ENCODE measurements at regions of chr2 and their contacts with region 1.

Region 1: DNA sequence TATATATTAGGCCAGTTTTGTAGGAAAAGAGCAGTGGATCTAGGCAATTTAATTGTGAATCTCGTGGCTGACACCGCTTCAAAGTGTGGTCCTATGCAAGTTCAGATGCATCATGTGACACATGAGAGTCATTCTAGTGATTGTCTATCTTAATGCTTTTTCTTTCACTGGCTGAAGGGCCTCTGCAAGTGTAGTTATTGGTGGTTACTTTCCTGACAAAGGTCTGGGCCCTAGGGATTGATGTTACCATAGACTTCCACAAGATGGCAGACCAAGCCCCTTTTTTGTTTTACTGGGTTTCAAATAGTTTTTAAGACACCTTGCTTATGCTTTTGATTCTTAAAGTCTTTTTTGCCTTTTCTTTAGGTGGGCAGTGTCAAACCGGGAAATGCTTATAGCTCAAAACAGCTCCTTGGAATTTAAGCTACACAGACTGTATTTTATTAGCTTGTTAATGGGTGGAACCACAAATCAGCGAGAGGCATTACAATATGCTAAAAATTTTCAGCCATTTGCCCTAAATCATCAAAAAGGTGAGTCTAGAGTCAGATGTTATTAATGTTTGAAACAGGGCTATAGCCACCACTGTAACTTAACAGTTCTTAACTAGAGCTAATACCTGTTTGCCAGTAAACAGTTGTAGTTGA is 25.9 kb downstream of the CD8A start:
- DNase-seq: peak; percentile 70
- ATAC-seq: peak; percentile 78
- H3K4me3 ChIP-seq: no peak overlapping the region
- H3K27ac ChIP-seq: no peak overlapping the region
- H3K4me1 ChIP-seq: no peaks in the 10 kb centered on the region
- H3K27me3 ChIP-seq: no peaks in the 10 kb centered on the region
- CTCF ChIP-seq: peak; percentile 75

Region 2: GRCh38 chr2:86518481-86518880 is 246.3 kb before region 1 on chr2:
- CTCF ChIA-PET with region 1: no interaction called
- POLR2A ChIA-PET with region 1: no interaction called
- intact Hi-C with region 1: loop called (anchors 1 kb)
- DNase-seq: peak; percentile 10
- ATAC-seq: peak; percentile 50
- H3K4me3 ChIP-seq: no peak overlapping the region
- H3K27ac ChIP-seq: no peak overlapping the region
- H3K4me1 ChIP-seq: peaks cover 17% of the 10 kb centered on the region
- H3K27me3 ChIP-seq: no peaks in the 10 kb centered on the region
- CTCF ChIP-seq: peak; percentile 56

Region 3: GRCh38 chr2:86704459-86704971 is 60.3 kb before region 1 on chr2:
- CTCF ChIA-PET with region 1: no interaction called
- POLR2A ChIA-PET with region 1: no interaction called
- intact Hi-C with region 1: loop called (anchors 5 kb)
- DNase-seq: peak; percentile 93
- ATAC-seq: peak; percentile 87
- H3K4me3 ChIP-seq: peak overlapping the region; percentile 58
- H3K27ac ChIP-seq: peak overlapping the region; percentile 80
- H3K4me1 ChIP-seq: peaks cover 27% of the 10 kb centered on the region
- H3K27me3 ChIP-seq: no peaks in the 10 kb centered on the region
- CTCF ChIP-seq: no peak

Region 4: GRCh38 chr2:86808315-86809161 is 43.8 kb after region 1 on chr2:
- CTCF ChIA-PET with region 1: no interaction called
- POLR2A ChIA-PET with region 1: no interaction called
- intact Hi-C with region 1: loop called (anchors 2 kb)
- DNase-seq: peak; percentile 92
- ATAC-seq: peak; percentile 90
- H3K4me3 ChIP-seq: peak overlapping the region; percentile 76
- H3K27ac ChIP-seq: peak overlapping the region; percentile 24
- H3K4me1 ChIP-seq: peaks cover 11% of the 10 kb centered on the region
- H3K27me3 ChIP-seq: no peaks in the 10 kb centered on the region
- CTCF ChIP-seq: peak; percentile 93

Region 5: DNA sequence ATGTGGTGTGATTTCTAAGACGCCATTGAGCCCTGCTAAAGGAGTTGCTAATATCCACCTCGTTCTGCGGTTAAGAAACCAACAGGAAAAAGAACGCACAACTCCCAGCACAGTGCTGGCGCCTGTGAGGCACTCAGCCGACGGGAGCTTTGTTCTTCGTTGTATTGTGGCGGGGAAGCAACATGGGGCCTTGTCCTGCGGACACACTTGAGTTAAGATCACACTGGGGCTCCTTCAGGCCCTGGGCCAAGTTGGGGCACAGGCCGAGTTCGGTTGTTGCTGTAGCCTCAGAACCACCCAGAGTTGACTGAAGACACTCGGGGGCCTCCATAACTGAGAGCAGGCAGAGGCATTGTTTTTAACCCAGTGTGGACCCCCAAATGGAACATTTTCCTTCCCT is 56.5 kb after region 1 on chr2:
- CTCF ChIA-PET with region 1: no interaction called
- POLR2A ChIA-PET with region 1: no interaction called
- intact Hi-C with region 1: no loop called
- DNase-seq: no peak
- ATAC-seq: no peak
- H3K4me3 ChIP-seq: no peak overlapping the region
- H3K27ac ChIP-seq: no peak overlapping the region
- H3K4me1 ChIP-seq: no peaks in the 10 kb centered on the region
- H3K27me3 ChIP-seq: no peaks in the 10 kb centered on the region; the same call in 1 of the 2 replicates
- CTCF ChIP-seq: no peak